ENCODE measurements at regions of chr5 and their contacts with region 1.

Region 1: DNA sequence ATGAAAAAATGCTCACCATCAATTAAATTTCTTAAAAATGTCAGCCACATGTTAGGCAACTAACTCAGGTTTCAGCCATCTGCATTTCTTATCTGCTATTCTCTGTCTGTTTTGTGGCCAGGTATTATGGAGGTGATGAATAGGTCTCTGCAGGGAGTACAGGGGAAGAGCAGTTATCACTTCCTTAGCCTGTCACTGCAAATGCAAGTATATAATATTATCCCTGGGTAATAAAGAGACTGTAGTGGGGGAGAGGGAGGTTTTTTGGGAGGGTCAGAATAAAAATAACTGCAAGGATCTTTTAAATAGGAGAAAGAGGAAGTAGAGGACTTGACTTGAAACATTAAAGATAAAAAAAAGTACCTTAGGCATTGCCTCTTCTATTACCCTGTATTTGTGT is 49.6 kb upstream of the PTGER4 start:
- DNase-seq: no peak
- ATAC-seq: peak; percentile 28
- H3K4me3 ChIP-seq: no peak overlapping the region
- H3K4me3 Mint-ChIP-seq: no peak overlapping the region
- H3K27ac ChIP-seq: no peak overlapping the region
- H3K27ac Mint-ChIP-seq: no peak overlapping the region
- H3K4me1 ChIP-seq: peaks cover 5 to 11% of the 10 kb centered on the region in 2 donors
- H3K4me1 Mint-ChIP-seq: peaks cover 21% of the 10 kb centered on the region
- H3K27me3 ChIP-seq: no peaks in the 10 kb centered on the region
- H3K27me3 Mint-ChIP-seq: no peaks in the 10 kb centered on the region
- CTCF ChIP-seq: no peak

Region 2: DNA sequence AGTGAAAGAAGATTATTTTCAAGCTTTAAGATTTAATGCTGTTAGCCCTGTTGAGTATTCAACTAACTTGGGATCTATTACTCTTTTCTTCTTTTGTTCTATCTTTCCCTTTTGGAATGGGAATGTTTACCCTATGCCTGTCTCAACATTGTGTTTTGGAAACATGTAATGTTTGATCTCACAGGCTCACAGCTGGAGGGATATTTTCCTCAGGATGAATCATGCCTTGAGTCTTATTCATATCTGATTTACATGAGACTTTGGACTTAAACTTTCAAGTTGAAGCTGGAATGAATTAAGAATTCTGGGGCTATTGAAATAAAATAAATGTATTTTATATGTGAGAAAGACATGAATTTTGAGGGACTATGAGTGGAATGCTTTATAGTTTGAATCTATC is 558.3 kb before region 1 on chr5:
- CTCF ChIA-PET with region 1: no interaction called
- POLR2A ChIA-PET with region 1: no interaction called
- intact Hi-C with region 1: no loop called
- DNase-seq: no peak
- ATAC-seq: no peak
- H3K4me3 ChIP-seq: no peak overlapping the region
- H3K4me3 Mint-ChIP-seq: no peak overlapping the region
- H3K27ac ChIP-seq: no peak overlapping the region
- H3K27ac Mint-ChIP-seq: no peak overlapping the region
- H3K4me1 ChIP-seq: no peaks in the 10 kb centered on the region
- H3K4me1 Mint-ChIP-seq: no peaks in the 10 kb centered on the region
- H3K27me3 ChIP-seq: no peaks in the 10 kb centered on the region
- H3K27me3 Mint-ChIP-seq: no peaks in the 10 kb centered on the region
- CTCF ChIP-seq: no peak

Region 3: GRCh38 chr5:40672425-40672824 is 42.3 kb after region 1 on chr5:
- CTCF ChIA-PET with region 1: no interaction called
- POLR2A ChIA-PET with region 1: no interaction called
- intact Hi-C with region 1: loop called (anchors 5 kb)
- DNase-seq: peak; percentile 50
- ATAC-seq: peak; percentile 45
- H3K4me3 ChIP-seq: no peak overlapping the region
- H3K4me3 Mint-ChIP-seq: no peak overlapping the region
- H3K27ac ChIP-seq: no peak overlapping the region
- H3K27ac Mint-ChIP-seq: no peak overlapping the region
- H3K4me1 ChIP-seq: peaks cover 7 to 11% of the 10 kb centered on the region in 2 donors
- H3K4me1 Mint-ChIP-seq: peaks cover 24% of the 10 kb centered on the region
- H3K27me3 ChIP-seq: no peaks in the 10 kb centered on the region
- H3K27me3 Mint-ChIP-seq: no peaks in the 10 kb centered on the region
- CTCF ChIP-seq: no peak

Measured in B cell (primary cell).